H1 (cell line): ENCODE measurements at regions of chr4 and their contacts with region 1.

Region 1: GRCh38 chr4:2977211-2978088 is 14.1 kb downstream of the GRK4 start:
- DNase-seq: no peak
- H3K4me3 ChIP-seq: no peak overlapping the region
- H3K27ac ChIP-seq: no peak overlapping the region
- H3K4me1 ChIP-seq: no peaks in the 10 kb centered on the region
- H3K27me3 ChIP-seq: no peaks in the 10 kb centered on the region
- CTCF ChIP-seq: no peak
- EP300 ChIP-seq: no peak
- POLR2A ChIP-seq: no peak
- RAD21 ChIP-seq: no peak

Region 2: GRCh38 chr4:2963175-2963965 is 14.1 kb before region 1 on chr4 and contains the starts of genes GRK4 and NOP14:
- CTCF ChIA-PET with region 1: interaction called, 60 read pairs
- POLR2A ChIA-PET with region 1: interaction called, 6 read pairs
- DNase-seq: peak; percentile 93 to 96
- H3K4me3 ChIP-seq: peak within 1 kb of the TSS; percentile 75 to 79 (median 76)
- H3K27ac ChIP-seq: peak within 1 kb of the TSS; percentile 91
- H3K4me1 ChIP-seq: peaks cover 3 to 9% (median 6%) of the 10 kb centered on the region in 4 experiments; a peak in 5 of 7 replicates
- H3K27me3 ChIP-seq: peaks cover 0 to 7% (median 6%) of the 10 kb centered on the region in 4 experiments; a peak in 4 of 7 replicates
- CTCF ChIP-seq: no peak; a peak in 1 of 4 replicates
- EP300 ChIP-seq: no peak
- POLR2A ChIP-seq: peak in 1 of 2 experiments; percentile 76; a peak in 2 of 3 replicates
- RAD21 ChIP-seq: no peak
- total RNA-seq, gene GRK4: 1.8 and 2.1 TPM in 2 replicates
- total RNA-seq, gene NOP14: 44.4 and 45.3 TPM in 2 replicates

Region 3: GRCh38 chr4:2995546-2996265 is 18.3 kb after region 1 on chr4:
- CTCF ChIA-PET with region 1: interaction called, 57 read pairs
- POLR2A ChIA-PET with region 1: no interaction called
- DNase-seq: no peak
- H3K4me3 ChIP-seq: no peak overlapping the region
- H3K27ac ChIP-seq: no peak overlapping the region
- H3K4me1 ChIP-seq: no peaks in the 10 kb centered on the region; a peak in 1 of 7 replicates
- H3K27me3 ChIP-seq: no peaks in the 10 kb centered on the region
- CTCF ChIP-seq: no peak
- EP300 ChIP-seq: no peak
- POLR2A ChIP-seq: no peak
- RAD21 ChIP-seq: no peak

Region 4: GRCh38 chr4:3031357-3032082 is 54.1 kb after region 1 on chr4:
- CTCF ChIA-PET with region 1: interaction called, 23 read pairs
- POLR2A ChIA-PET with region 1: no interaction called
- DNase-seq: no peak
- H3K4me3 ChIP-seq: no peak overlapping the region
- H3K27ac ChIP-seq: no peak overlapping the region
- H3K4me1 ChIP-seq: no peaks in the 10 kb centered on the region
- H3K27me3 ChIP-seq: no peaks in the 10 kb centered on the region; a peak in 2 of 7 replicates
- CTCF ChIP-seq: no peak
- EP300 ChIP-seq: no peak
- POLR2A ChIP-seq: no peak
- RAD21 ChIP-seq: no peak

Region 5: GRCh38 chr4:3041192-3042142 is 64.0 kb after region 1 on chr4:
- CTCF ChIA-PET with region 1: interaction called, 23 read pairs
- POLR2A ChIA-PET with region 1: no interaction called
- DNase-seq: peak in 1 of 2 experiments; percentile 64
- H3K4me3 ChIP-seq: 0 out of 8 replicates have a peak overlapping the region, but pooled peaks of 1 of the 4 experiments have one; percentile 2
- H3K27ac ChIP-seq: no peak overlapping the region
- H3K4me1 ChIP-seq: peaks cover 0 to 5% (median 0%) of the 10 kb centered on the region in 4 experiments; a peak in 4 of 7 replicates
- H3K27me3 ChIP-seq: peaks cover 0 to 7% (median 2%) of the 10 kb centered on the region in 4 experiments; a peak in 2 of 7 replicates
- CTCF ChIP-seq: peak in 2 of 3 experiments; percentile 5 to 8; a peak in 1 of 4 replicates
- EP300 ChIP-seq: no peak
- POLR2A ChIP-seq: no peak
- RAD21 ChIP-seq: no peak

Region 6: GRCh38 chr4:3292571-3293400 is 315.3 kb after region 1 on chr4 and contains the start of gene RGS12:
- CTCF ChIA-PET with region 1: no interaction called
- POLR2A ChIA-PET with region 1: no interaction called
- DNase-seq: peak; percentile 63 to 95
- H3K4me3 ChIP-seq: peak within 1 kb of the TSS; percentile 68 to 86 (median 80)
- H3K27ac ChIP-seq: no peak within 1 kb of the TSS
- H3K4me1 ChIP-seq: peaks cover 0 to 23% (median 11%) of the 10 kb centered on the region in 4 experiments; a peak in 5 of 7 replicates
- H3K27me3 ChIP-seq: peaks cover 0 to 12% (median 1%) of the 10 kb centered on the region in 4 experiments; a peak in 3 of 7 replicates
- CTCF ChIP-seq: no peak
- EP300 ChIP-seq: no peak
- POLR2A ChIP-seq: no peak
- RAD21 ChIP-seq: no peak
- total RNA-seq, gene RGS12: 16.3 and 16.4 TPM in 2 replicates